MCF 10A (cell line): ENCODE measurements at regions of chr7 and their contacts with region 1.

Region 1: DNA sequence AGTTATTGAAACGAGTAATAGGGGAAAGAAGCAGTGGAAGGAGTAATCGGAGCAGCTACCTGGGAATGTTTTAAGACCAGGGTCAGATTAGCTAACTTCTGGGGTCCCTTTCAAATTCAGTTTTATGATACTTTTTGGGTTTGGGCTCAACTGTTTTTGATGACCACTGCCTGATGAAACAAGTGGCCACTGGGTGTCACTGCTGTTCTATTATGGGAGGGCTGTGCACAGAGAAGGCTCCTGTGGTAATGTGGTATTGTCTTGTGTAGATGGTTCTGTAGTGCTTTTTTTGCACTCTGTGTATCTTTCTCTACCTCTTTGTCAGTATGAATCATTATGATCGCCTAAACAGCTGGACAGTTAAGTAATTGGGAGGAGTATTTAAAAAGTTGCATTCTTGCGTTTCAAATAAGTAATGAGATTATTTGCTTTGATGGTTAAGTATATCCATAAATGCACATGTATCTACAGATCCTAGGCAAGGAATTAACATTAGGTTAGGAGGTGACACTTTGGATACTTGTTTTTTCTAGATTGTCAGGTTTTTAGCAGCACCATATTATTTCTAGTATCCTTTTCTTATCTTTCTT is 128.4 kb downstream of the ABCA13 start:
- DNase-seq: peak; percentile 71
- H3K4me3 Mint-ChIP-seq: no peak overlapping the region
- H3K27ac Mint-ChIP-seq: no peak overlapping the region
- H3K4me1 Mint-ChIP-seq: peaks cover 12% of the 10 kb centered on the region
- H3K27me3 Mint-ChIP-seq: no peaks in the 10 kb centered on the region
- CTCF ChIP-seq: peak; percentile 76

Region 2: GRCh38 chr7:47901542-47901941 is 398.1 kb before region 1 on chr7:
- CTCF ChIA-PET with region 1: no interaction called
- POLR2A ChIA-PET with region 1: no interaction called
- intact Hi-C with region 1: no loop called
- DNase-seq: peak; percentile 11
- H3K4me3 Mint-ChIP-seq: no peak overlapping the region
- H3K27ac Mint-ChIP-seq: no peak overlapping the region
- H3K4me1 Mint-ChIP-seq: no peaks in the 10 kb centered on the region
- H3K27me3 Mint-ChIP-seq: peaks cover 34% of the 10 kb centered on the region
- CTCF ChIP-seq: no peak

Region 3: DNA sequence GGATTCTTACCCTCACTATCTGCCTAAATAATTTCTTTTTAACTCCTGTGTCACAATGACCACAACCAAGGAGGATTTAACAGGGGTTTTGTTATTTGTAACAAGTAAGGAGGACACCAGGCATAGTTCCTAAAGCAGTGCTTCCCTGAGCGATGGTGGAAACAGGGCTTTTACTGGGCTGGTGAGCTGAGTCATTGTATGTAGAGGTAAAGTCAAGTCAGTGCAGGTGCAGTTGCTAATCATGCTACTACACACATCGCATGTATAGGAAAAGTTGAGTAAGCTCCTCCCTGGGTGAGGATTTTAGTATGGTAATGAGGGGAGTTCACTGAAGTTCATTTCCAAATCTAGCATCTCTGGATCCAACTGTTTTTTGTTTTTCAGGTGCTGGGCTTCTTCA is 151.4 kb before region 1 on chr7:
- CTCF ChIA-PET with region 1: no interaction called
- POLR2A ChIA-PET with region 1: no interaction called
- intact Hi-C with region 1: no loop called
- DNase-seq: no peak
- H3K4me3 Mint-ChIP-seq: no peak overlapping the region
- H3K27ac Mint-ChIP-seq: no peak overlapping the region
- H3K4me1 Mint-ChIP-seq: no peaks in the 10 kb centered on the region
- H3K27me3 Mint-ChIP-seq: peaks cover 41% of the 10 kb centered on the region
- CTCF ChIP-seq: no peak

Region 4: GRCh38 chr7:48168159-48168558 is 131.5 kb before region 1 on chr7:
- CTCF ChIA-PET with region 1: no interaction called
- POLR2A ChIA-PET with region 1: no interaction called
- intact Hi-C with region 1: loop called (anchors 10 kb)
- DNase-seq: peak; percentile 33
- H3K4me3 Mint-ChIP-seq: no peak overlapping the region
- H3K27ac Mint-ChIP-seq: no peak overlapping the region
- H3K4me1 Mint-ChIP-seq: peaks cover 7% of the 10 kb centered on the region
- H3K27me3 Mint-ChIP-seq: no peaks in the 10 kb centered on the region
- CTCF ChIP-seq: no peak

Region 5: GRCh38 chr7:48289656-48290055 is 10.0 kb before region 1 on chr7:
- CTCF ChIA-PET with region 1: interaction called, 30 read pairs
- POLR2A ChIA-PET with region 1: no interaction called
- intact Hi-C with region 1: no loop called
- DNase-seq: no peak
- H3K4me3 Mint-ChIP-seq: no peak overlapping the region
- H3K27ac Mint-ChIP-seq: no peak overlapping the region
- H3K4me1 Mint-ChIP-seq: peaks cover 7% of the 10 kb centered on the region
- H3K27me3 Mint-ChIP-seq: peaks cover 25% of the 10 kb centered on the region
- CTCF ChIP-seq: no peak

Region 6: GRCh38 chr7:48337012-48337621 is 37.4 kb after region 1 on chr7:
- CTCF ChIA-PET with region 1: interaction called, 20 read pairs
- POLR2A ChIA-PET with region 1: no interaction called
- intact Hi-C with region 1: loop called (anchors 1 kb)
- DNase-seq: peak; percentile 47
- H3K4me3 Mint-ChIP-seq: no peak overlapping the region
- H3K27ac Mint-ChIP-seq: no peak overlapping the region
- H3K4me1 Mint-ChIP-seq: no peaks in the 10 kb centered on the region
- H3K27me3 Mint-ChIP-seq: peaks cover 6% of the 10 kb centered on the region
- CTCF ChIP-seq: peak; percentile 61

Region 7: GRCh38 chr7:48875045-48875916 is 575.6 kb after region 1 on chr7:
- CTCF ChIA-PET with region 1: interaction called, 75 read pairs
- POLR2A ChIA-PET with region 1: no interaction called
- intact Hi-C with region 1: loop called (anchors 1 kb)
- DNase-seq: peak; percentile 43
- H3K4me3 Mint-ChIP-seq: no peak overlapping the region
- H3K27ac Mint-ChIP-seq: no peak overlapping the region
- H3K4me1 Mint-ChIP-seq: no peaks in the 10 kb centered on the region
- H3K27me3 Mint-ChIP-seq: peaks cover 49% of the 10 kb centered on the region
- CTCF ChIP-seq: peak; percentile 79

Region 8: GRCh38 chr7:49166441-49166840 is 866.8 kb after region 1 on chr7:
- CTCF ChIA-PET with region 1: interaction called, 4 read pairs
- POLR2A ChIA-PET with region 1: no interaction called
- intact Hi-C with region 1: loop called (anchors 1 kb)
- DNase-seq: peak; percentile 25
- H3K4me3 Mint-ChIP-seq: no peak overlapping the region
- H3K27ac Mint-ChIP-seq: no peak overlapping the region
- H3K4me1 Mint-ChIP-seq: no peaks in the 10 kb centered on the region
- H3K27me3 Mint-ChIP-seq: peaks cover 72% of the 10 kb centered on the region
- CTCF ChIP-seq: peak; percentile 12

Region 9: GRCh38 chr7:49852619-49853462 is 1553.2 kb after region 1 on chr7:
- CTCF ChIA-PET with region 1: interaction called, 17 read pairs
- POLR2A ChIA-PET with region 1: no interaction called
- intact Hi-C with region 1: loop called (anchors 1 kb)
- DNase-seq: peak; percentile 66
- H3K4me3 Mint-ChIP-seq: no peak overlapping the region
- H3K27ac Mint-ChIP-seq: no peak overlapping the region
- H3K4me1 Mint-ChIP-seq: no peaks in the 10 kb centered on the region
- H3K27me3 Mint-ChIP-seq: peaks cover 33% of the 10 kb centered on the region
- CTCF ChIP-seq: peak; percentile 90